CD4-positive, alpha-beta memory T cell (primary cell): ENCODE measurements at regions of chr19 and their contacts with region 1.

Region 1: GRCh38 chr19:36528194-36528920 is at the start of gene ZNF260:
- DNase-seq: peak; percentile 90 to 95 (median 93)
- H3K4me3 ChIP-seq: peak within 1 kb of the TSS; percentile 88 to 99
- H3K4me3 Mint-ChIP-seq: peak within 1 kb of the TSS; percentile 91 to 100 (median 97)
- H3K27ac ChIP-seq: peak within 1 kb of the TSS; percentile 87
- H3K27ac Mint-ChIP-seq: peak within 1 kb of the TSS; percentile 91 to 99 (median 97)
- H3K4me1 ChIP-seq: peaks cover 22% of the 10 kb centered on the region
- H3K4me1 Mint-ChIP-seq: peaks cover 17 to 29% (median 22%) of the 10 kb centered on the region in 4 donors
- H3K27me3 ChIP-seq: no peaks in the 10 kb centered on the region
- H3K27me3 Mint-ChIP-seq: no peaks in the 10 kb centered on the region
- total RNA-seq, gene ZNF260: 15.4 to 18.8 TPM

Region 2: GRCh38 chr19:36378625-36379509 is 149.5 kb before region 1 on chr19 and contains the start of gene ZFP14:
- CTCF ChIA-PET with region 1: no interaction called
- POLR2A ChIA-PET with region 1: interaction called, 18 read pairs
- intact Hi-C with region 1: loop called (anchors 1 kb)
- DNase-seq: peak; percentile 92 to 96 (median 95)
- H3K4me3 ChIP-seq: peak within 1 kb of the TSS; percentile 76 to 87
- H3K4me3 Mint-ChIP-seq: peak within 1 kb of the TSS; percentile 87 to 96 (median 94)
- H3K27ac ChIP-seq: peak within 1 kb of the TSS; percentile 76
- H3K27ac Mint-ChIP-seq: peak within 1 kb of the TSS; percentile 81 to 97 (median 93)
- H3K4me1 ChIP-seq: peaks cover 18% of the 10 kb centered on the region
- H3K4me1 Mint-ChIP-seq: peaks cover 13 to 34% (median 18%) of the 10 kb centered on the region in 4 donors
- H3K27me3 ChIP-seq: no peaks in the 10 kb centered on the region
- H3K27me3 Mint-ChIP-seq: no peaks in the 10 kb centered on the region
- total RNA-seq, gene ZFP14: 20.7 to 21.2 TPM

Region 3: DNA sequence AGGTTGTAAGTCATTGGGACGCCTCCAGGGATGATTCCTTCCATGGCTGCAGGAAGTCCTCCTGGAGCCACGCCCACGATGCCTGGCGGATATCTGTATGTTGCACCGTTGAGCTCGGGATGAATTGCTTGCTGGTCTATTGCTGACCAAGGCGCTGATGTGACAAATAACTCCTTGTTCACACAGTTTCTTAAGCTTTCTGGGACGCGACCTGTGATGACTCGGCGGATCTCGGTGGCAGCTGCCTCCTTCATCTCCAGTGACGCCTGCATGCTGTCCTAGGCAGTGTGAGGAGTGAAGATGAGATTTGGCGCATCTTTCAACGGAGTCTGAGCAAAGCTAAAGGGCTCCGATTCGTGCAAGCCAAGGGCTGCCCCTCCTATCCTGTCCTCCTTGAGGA is 31.4 kb before region 1 on chr19:
- CTCF ChIA-PET with region 1: no interaction called
- POLR2A ChIA-PET with region 1: no interaction called
- intact Hi-C with region 1: no loop called
- DNase-seq: no peak
- H3K4me3 ChIP-seq: no peak overlapping the region
- H3K4me3 Mint-ChIP-seq: no peak overlapping the region
- H3K27ac ChIP-seq: no peak overlapping the region
- H3K27ac Mint-ChIP-seq: no peak overlapping the region
- H3K4me1 ChIP-seq: no peaks in the 10 kb centered on the region
- H3K4me1 Mint-ChIP-seq: no peaks in the 10 kb centered on the region
- H3K27me3 ChIP-seq: no peaks in the 10 kb centered on the region
- H3K27me3 Mint-ChIP-seq: no peaks in the 10 kb centered on the region

Region 4: GRCh38 chr19:36573020-36573885 is 44.9 kb after region 1 on chr19 and contains the start of gene ZNF529:
- CTCF ChIA-PET with region 1: no interaction called
- POLR2A ChIA-PET with region 1: interaction called, 21 read pairs
- intact Hi-C with region 1: loop called (anchors 1 kb)
- DNase-seq: peak; percentile 86 to 98 (median 89)
- H3K4me3 ChIP-seq: peak within 1 kb of the TSS; percentile 70 to 86
- H3K4me3 Mint-ChIP-seq: peak within 1 kb of the TSS; percentile 89 to 98 (median 96)
- H3K27ac ChIP-seq: peak within 1 kb of the TSS; percentile 95
- H3K27ac Mint-ChIP-seq: peak within 1 kb of the TSS; percentile 93 to 100 (median 98)
- H3K4me1 ChIP-seq: peaks cover 22% of the 10 kb centered on the region
- H3K4me1 Mint-ChIP-seq: peaks cover 25 to 39% (median 34%) of the 10 kb centered on the region in 4 donors
- H3K27me3 ChIP-seq: no peaks in the 10 kb centered on the region
- H3K27me3 Mint-ChIP-seq: no peaks in the 10 kb centered on the region
- total RNA-seq, gene ZNF529: 32.8 to 33.5 TPM

Region 5: DNA sequence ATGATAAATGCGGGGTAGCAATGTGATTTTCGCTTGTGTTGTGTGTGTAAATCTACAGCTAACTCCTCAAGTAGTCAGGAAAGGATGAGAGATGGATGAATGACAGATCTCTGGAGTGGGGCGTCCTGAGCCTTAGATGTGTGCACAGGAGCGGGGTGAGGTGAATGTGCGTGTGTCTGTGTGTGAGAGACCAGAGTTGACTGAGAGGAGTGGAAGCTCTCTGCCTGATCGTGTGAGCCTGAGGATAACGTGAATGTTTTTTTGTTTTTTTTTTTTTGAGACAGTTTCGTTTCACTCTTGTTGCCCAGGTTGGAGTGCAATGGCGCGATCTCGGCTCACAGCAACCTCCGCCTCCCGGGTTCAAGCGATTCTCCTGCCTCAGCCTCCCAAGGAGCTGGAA is 137.5 kb after region 1 on chr19:
- CTCF ChIA-PET with region 1: no interaction called
- POLR2A ChIA-PET with region 1: interaction called, 6 read pairs
- intact Hi-C with region 1: loop called (anchors 1 kb)
- DNase-seq: no peak
- H3K4me3 ChIP-seq: peak overlapping the region; percentile 76 to 100
- H3K4me3 Mint-ChIP-seq: peak overlapping the region; percentile 94 to 100 (median 99)
- H3K27ac ChIP-seq: peak overlapping the region; percentile 71
- H3K27ac Mint-ChIP-seq: peak overlapping the region in 6 of 7 donors; percentile 5 to 99 (median 94)
- H3K4me1 ChIP-seq: peaks cover 28% of the 10 kb centered on the region
- H3K4me1 Mint-ChIP-seq: peaks cover 24 to 45% (median 31%) of the 10 kb centered on the region in 4 donors
- H3K27me3 ChIP-seq: no peaks in the 10 kb centered on the region
- H3K27me3 Mint-ChIP-seq: no peaks in the 10 kb centered on the region

Region 6: GRCh38 chr19:36915992-36916830 is 387.9 kb after region 1 on chr19 and contains the starts of genes ZNF568 and ZNF829:
- CTCF ChIA-PET with region 1: no interaction called
- POLR2A ChIA-PET with region 1: no interaction called
- intact Hi-C with region 1: loop called (anchors 1 kb)
- DNase-seq: peak; percentile 92 to 98 (median 95)
- H3K4me3 ChIP-seq: peak within 1 kb of the TSS; percentile 60 to 88
- H3K4me3 Mint-ChIP-seq: peak within 1 kb of the TSS; percentile 84 to 97 (median 94)
- H3K27ac ChIP-seq: peak within 1 kb of the TSS; percentile 93
- H3K27ac Mint-ChIP-seq: peak within 1 kb of the TSS; percentile 81 to 97 (median 96)
- H3K4me1 ChIP-seq: peaks cover 14% of the 10 kb centered on the region
- H3K4me1 Mint-ChIP-seq: peaks cover 19 to 39% (median 28%) of the 10 kb centered on the region in 4 donors
- H3K27me3 ChIP-seq: no peaks in the 10 kb centered on the region
- H3K27me3 Mint-ChIP-seq: no peaks in the 10 kb centered on the region
- total RNA-seq, gene ZNF568: 18.8 to 20.3 TPM
- total RNA-seq, gene ZNF829: 8.5 to 9.8 TPM

Region 7: DNA sequence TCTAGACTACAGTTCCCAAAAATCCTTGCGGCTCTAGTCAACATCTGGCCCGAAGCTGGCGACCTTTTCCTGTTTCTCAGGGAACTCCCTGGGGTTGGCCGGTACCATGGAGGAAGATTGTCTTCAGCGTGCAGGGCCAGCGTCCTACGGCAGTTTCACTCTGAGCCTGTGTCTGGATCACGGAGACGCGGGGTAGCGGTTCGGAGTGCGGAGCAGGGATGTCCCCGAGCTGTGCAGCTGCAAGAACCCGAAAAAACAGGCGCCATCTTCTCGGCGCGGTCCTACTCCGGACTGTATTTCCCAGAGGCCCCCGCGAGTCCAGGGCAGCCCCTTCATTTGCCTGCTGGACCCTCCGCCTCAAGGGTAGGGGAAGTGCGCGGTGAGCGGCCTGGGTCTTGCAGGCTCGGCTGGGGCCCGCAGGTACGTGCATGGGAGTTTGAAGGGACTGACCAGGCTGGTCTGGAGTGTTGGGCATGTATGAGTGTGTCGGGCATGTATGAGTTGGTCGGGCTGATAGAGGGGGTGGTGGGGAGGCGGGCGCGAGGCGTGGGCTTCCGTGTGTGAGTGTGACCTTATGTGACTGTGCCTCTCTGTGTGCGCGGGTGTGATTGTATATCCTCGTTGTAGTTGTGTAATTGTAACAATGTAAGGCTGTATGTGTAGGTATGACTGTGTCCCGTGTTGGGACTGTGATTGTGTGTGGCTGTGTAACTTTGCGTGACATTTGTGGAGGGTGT is 689.7 kb after region 1 on chr19 and contains the start of gene ZNF383:
- CTCF ChIA-PET with region 1: no interaction called
- POLR2A ChIA-PET with region 1: interaction called, 11 read pairs
- intact Hi-C with region 1: loop called (anchors 5 kb)
- DNase-seq: peak; percentile 80 to 87 (median 83)
- H3K4me3 ChIP-seq: peak within 1 kb of the TSS; percentile 85 to 99
- H3K4me3 Mint-ChIP-seq: peak within 1 kb of the TSS; percentile 89 to 98 (median 91)
- H3K27ac ChIP-seq: peak within 1 kb of the TSS; percentile 80
- H3K27ac Mint-ChIP-seq: peak within 1 kb of the TSS; percentile 88 to 98 (median 96)
- H3K4me1 ChIP-seq: peaks cover 16% of the 10 kb centered on the region
- H3K4me1 Mint-ChIP-seq: peaks cover 19 to 40% (median 31%) of the 10 kb centered on the region in 4 donors
- H3K27me3 ChIP-seq: no peaks in the 10 kb centered on the region
- H3K27me3 Mint-ChIP-seq: no peaks in the 10 kb centered on the region
- total RNA-seq, gene ZNF383: 32.0 to 34.0 TPM